Activated CD4-positive, alpha-beta T cell treated with anti-CD3 and anti-CD28 coated beads for 36 hours (primary cell): ENCODE measurements at regions of chr3 and their contacts with region 1.

Region 1: DNA sequence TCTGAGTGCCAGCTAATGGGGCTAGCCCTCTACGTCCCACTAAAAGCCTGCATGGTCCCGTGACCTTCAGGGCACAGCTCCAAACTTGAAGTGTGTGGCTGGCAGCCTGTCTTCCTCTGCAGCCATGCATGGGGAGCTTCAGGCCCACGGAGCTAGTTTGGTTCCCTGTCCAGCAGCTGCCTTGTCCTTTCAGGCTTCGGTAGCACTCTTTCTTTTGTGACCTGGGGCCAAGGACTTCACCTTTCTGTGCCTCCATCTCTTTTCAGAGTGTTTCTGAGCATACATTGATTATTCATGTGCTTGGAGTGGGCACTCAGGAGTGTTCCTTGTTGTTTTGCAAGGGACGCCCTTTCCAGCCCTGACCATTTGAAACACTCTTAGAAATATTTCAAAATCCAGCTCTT is 155.2 kb downstream of the DNAJB8 start:
- DNase-seq: no peak
- ATAC-seq: no peak
- H3K4me3 Mint-ChIP-seq: no peak overlapping the region
- H3K27ac Mint-ChIP-seq: no peak overlapping the region
- H3K4me1 Mint-ChIP-seq: peaks cover 44% of the 10 kb centered on the region
- H3K27me3 Mint-ChIP-seq: no peaks in the 10 kb centered on the region

Region 2: GRCh38 chr3:128170805-128171516 is 140.5 kb before region 1 on chr3:
- CTCF ChIA-PET with region 1: no interaction called
- POLR2A ChIA-PET with region 1: no interaction called
- intact Hi-C with region 1: loop called in 1 of 2 experiments (anchors 5 kb)
- DNase-seq: peak; percentile 18
- ATAC-seq: peak; percentile 30
- H3K4me3 Mint-ChIP-seq: no peak overlapping the region
- H3K27ac Mint-ChIP-seq: no peak overlapping the region
- H3K4me1 Mint-ChIP-seq: peaks cover 25% of the 10 kb centered on the region
- H3K27me3 Mint-ChIP-seq: no peaks in the 10 kb centered on the region

Region 3: DNA sequence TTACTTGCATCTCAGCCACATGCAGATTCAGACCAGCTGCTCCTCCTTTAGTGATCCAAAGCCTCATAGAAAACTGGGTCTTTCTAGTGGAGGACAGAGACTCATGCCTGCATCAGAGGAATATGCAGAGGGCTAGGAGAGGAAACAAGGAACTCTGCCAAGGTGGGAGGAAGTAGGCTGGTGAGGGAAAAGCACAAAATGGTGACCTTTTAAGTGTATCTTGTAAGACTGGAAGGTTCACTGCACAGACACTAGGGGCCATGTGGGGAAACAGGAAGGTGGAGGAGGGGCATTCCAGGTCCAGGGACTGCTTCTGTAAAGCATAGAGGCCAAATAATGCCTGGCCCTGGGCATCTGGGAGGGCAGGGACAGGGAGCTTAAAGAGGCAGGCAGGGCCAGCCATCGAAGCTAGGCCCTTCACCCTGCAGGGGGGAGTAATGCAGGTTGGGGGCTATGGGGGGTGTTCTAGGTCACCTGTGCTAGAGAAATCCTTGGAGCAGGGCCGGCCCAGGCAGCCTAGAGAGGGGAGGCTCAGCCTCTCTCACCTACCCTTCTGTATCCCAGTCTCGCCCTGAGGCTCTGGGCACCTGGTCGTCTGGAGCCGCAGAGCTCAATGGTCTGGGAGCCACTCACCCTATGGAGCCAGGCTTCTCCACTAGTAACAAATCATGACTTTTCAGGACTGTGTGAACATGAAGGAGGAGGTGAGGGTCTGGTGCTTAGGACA is 37.5 kb after region 1 on chr3:
- CTCF ChIA-PET with region 1: no interaction called
- POLR2A ChIA-PET with region 1: no interaction called
- intact Hi-C with region 1: no loop called
- DNase-seq: no peak
- ATAC-seq: no peak
- H3K4me3 Mint-ChIP-seq: no peak overlapping the region
- H3K27ac Mint-ChIP-seq: no peak overlapping the region
- H3K4me1 Mint-ChIP-seq: peaks cover 5% of the 10 kb centered on the region
- H3K27me3 Mint-ChIP-seq: no peaks in the 10 kb centered on the region